Activated naive CD4-positive, alpha-beta T cell treated with anti-CD3 and anti-CD28 coated beads, Interleukin-2, amount 10 ng/mL, durations not matched to agents 7 days and 5 days (primary cell): ENCODE measurements at regions of chr16 and their contacts with region 1.

Region 1: GRCh38 chr16:75074920-75075687 is 41.5 kb downstream of the LDHD start:
- DNase-seq: peak; percentile 88
- H3K4me3 Mint-ChIP-seq: peak overlapping the region; percentile 39
- H3K27ac Mint-ChIP-seq: peak overlapping the region; percentile 89
- H3K4me1 Mint-ChIP-seq: peaks cover 63% of the 10 kb centered on the region
- H3K27me3 Mint-ChIP-seq: no peaks in the 10 kb centered on the region

Region 2: GRCh38 chr16:75064403-75065148 is 10.5 kb before region 1 on chr16:
- CTCF ChIA-PET with region 1: interaction called, 10 read pairs
- DNase-seq: peak; percentile 46
- H3K4me3 Mint-ChIP-seq: peak overlapping the region; percentile 38
- H3K27ac Mint-ChIP-seq: peak overlapping the region; percentile 84
- H3K4me1 Mint-ChIP-seq: peaks cover 33% of the 10 kb centered on the region
- H3K27me3 Mint-ChIP-seq: no peaks in the 10 kb centered on the region